ENCODE measurements at regions of chr19 and their contacts with region 1.

Region 1: DNA sequence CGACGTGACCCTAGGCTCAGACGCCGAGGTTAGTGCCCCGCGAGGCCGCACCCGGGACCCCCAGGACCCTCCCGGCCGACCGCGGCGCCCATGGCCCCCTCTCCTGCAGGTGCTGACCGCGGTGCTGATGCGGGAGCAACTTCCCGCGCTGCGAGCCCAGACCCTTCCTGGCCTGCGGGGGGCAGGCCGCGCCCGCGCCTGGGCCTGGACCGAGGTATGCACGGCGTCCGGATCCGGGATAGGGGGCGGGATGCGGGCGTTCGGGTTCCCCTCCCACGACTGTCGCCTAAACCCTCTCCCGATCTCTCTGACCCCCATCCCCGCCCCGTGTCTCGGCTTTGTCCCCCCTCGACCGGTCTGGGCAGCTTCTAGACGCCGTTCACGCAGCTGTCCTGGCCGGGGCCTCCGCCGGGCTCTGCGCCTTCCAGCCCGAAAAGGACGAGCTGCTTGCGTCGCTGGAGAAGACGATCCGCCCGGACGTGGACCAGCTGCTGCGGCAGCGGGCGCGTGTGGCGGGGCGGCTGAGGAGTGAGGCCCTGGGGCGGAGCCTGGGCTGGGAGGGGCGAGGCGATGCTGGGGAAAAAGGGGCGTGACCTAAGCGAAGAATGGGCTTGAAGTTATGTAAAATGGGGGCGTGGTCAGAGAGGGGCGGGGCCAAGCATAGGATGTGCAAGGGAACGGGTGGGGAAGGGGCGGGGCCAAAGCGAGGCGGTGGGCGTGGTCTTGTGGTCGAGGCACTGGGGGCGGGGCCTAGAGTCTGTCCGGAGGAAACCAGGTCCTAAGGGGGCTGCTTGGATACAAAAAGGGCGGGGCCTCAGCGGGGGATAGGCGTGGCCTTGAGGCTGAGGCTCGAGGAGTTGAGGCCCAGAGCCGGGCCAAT is 16.0 kb upstream of the COLGALT1 start:
- DNase-seq: peak; percentile 98
- ATAC-seq: peak; percentile 89

Region 2: GRCh38 chr19:17336872-17337722 is 202.4 kb before region 1 on chr19 and contains the start of gene GTPBP3:
- intact Hi-C with region 1: no loop called
- DNase-seq: peak; percentile 99
- ATAC-seq: peak; percentile 93
- total RNA-seq, gene GTPBP3: 11.5 TPM

Region 3: GRCh38 chr19:17475541-17476115 is 63.9 kb before region 1 on chr19:
- intact Hi-C with region 1: no loop called
- DNase-seq: peak; percentile 79
- ATAC-seq: peak; percentile 87

Region 4: GRCh38 chr19:17575871-17576758 is 36.6 kb after region 1 on chr19:
- intact Hi-C with region 1: loop called (anchors 2 kb)
- DNase-seq: no peak
- ATAC-seq: no peak

Measured in Right ventricle myocardium inferior (tissue), 1 donor.